Activated CD4-positive, alpha-beta memory T cell treated with anti-CD3 and anti-CD28 coated beads, Interleukin-2, amount 10 ng/mL, durations not matched to agents 7 days and 5 days (primary cell): ENCODE measurements at regions of chr7 and their contacts with region 1.

Region 1: GRCh38 chr7:129163875-129164544 is 19.5 kb downstream of the TSPAN33 start:
- DNase-seq: no peak
- H3K4me3 Mint-ChIP-seq: no peak overlapping the region
- H3K27ac Mint-ChIP-seq: no peak overlapping the region
- H3K4me1 Mint-ChIP-seq: peaks cover 9% of the 10 kb centered on the region
- H3K27me3 Mint-ChIP-seq: peaks cover 27% of the 10 kb centered on the region

Region 2: DNA sequence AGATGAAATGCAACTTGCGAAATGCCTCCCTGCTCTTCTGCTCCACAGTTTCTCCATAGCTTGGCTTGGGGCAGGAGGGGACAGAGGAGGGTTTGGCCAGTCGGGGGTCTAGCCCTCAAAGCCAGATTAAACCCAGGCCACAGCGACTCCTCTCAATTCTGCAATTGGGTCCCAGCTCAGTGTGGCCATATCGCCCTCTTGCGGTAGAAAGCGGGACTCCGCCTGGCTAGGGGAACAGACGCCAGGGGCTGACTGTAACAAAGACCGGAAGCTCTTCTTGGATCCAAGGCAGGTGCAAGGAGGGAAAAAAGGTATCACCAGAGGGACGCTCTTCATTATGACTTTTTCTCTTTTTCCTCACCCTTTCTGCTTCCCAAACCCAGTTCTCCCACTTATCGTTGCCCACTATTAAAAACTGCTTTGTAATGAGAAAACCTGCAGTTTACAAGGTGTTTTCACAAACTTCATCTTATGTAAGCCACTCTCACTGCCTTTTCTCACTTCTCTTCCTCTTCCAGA is 72.5 kb before region 1 on chr7:
- CTCF ChIA-PET with region 1: interaction called, 11 read pairs
- POLR2A ChIA-PET with region 1: no interaction called
- DNase-seq: peak; percentile 88
- H3K4me3 Mint-ChIP-seq: no peak overlapping the region
- H3K27ac Mint-ChIP-seq: no peak overlapping the region
- H3K4me1 Mint-ChIP-seq: peaks cover 33% of the 10 kb centered on the region
- H3K27me3 Mint-ChIP-seq: peaks cover 7% of the 10 kb centered on the region

Region 3: DNA sequence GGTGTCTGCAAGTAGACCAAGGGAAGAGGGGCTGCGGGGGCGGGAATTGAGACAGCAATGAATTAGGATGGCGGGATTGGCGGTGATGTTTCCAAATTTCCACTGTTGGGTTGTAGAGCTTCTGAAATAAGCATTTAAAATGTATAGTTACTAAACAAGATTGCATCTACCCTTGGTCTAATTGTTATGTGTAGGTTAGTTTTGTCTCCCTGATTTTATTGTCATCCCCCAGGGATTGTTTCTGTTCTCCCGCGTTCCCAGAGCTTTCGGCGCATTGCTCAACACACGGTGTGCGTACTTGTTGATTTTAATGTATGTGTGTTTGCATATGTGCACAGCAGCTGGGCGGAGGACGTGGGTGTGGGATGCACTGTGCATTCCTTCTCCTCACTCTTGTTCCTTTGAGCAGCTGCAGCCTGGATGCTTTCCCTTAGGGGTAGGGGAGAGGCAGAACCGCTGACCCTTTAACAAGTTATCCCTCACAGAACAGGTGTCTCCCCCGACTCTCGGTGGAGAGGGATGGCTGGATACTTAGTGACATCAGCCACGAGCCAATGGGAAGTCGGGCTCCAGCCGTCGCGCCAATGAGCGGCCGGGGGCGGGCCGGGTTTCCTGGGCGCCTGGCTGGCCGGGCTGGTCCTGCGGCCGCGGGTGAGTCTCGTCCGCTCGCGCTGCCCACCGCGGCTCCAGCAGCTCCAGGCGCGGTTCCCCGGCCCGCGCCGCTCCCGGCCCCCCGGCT is 19.7 kb before region 1 on chr7 and contains the start of gene TSPAN33:
- CTCF ChIA-PET with region 1: interaction called, 12 read pairs
- POLR2A ChIA-PET with region 1: no interaction called
- DNase-seq: peak; percentile 67
- H3K4me3 Mint-ChIP-seq: peak within 1 kb of the TSS; percentile 75
- H3K27ac Mint-ChIP-seq: no peak within 1 kb of the TSS
- H3K4me1 Mint-ChIP-seq: peaks cover 10% of the 10 kb centered on the region
- H3K27me3 Mint-ChIP-seq: peaks cover 51% of the 10 kb centered on the region
- total RNA-seq, gene TSPAN33: 0.48 to 0.86 TPM

Region 4: DNA sequence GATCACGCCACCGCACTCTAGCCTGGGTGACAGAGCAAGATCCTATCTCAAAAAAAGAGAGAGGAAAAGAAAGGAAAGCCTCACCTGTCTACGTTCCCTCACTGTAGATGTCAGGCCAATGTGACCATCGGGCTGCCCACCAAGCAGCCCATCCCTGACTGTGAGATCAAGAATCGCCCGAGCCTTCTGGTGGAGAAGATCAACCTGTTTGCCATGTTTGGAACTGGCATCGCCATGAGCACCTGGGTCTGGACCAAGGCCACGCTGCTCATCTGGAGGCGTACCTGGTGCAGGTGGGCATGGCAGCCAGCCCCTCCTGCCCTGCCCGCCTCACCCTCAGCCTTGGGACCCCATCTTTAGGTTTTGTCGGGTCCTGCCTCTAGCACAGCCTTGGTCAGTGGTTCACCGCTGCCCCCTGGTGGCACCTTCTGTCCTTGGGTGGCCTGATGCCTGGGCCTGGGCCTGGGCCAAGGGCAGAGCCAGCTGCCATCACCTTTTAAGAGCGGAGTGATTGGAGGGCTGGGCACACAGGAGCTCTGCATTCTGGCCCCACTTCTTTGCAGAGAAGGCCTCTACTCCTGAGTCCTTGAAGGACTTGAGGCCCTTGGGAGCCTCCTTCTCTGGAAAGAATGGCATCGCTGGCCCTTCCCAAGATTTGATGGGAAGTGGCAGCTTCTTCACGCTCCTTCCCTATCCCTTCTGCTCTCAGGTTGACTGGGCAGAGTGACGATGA is 46.4 kb after region 1 on chr7:
- CTCF ChIA-PET with region 1: interaction called, 46 read pairs
- POLR2A ChIA-PET with region 1: no interaction called
- DNase-seq: peak; percentile 65
- H3K4me3 Mint-ChIP-seq: no peak overlapping the region
- H3K27ac Mint-ChIP-seq: no peak overlapping the region
- H3K4me1 Mint-ChIP-seq: no peaks in the 10 kb centered on the region
- H3K27me3 Mint-ChIP-seq: peaks cover 10% of the 10 kb centered on the region

Region 5: GRCh38 chr7:129218514-129219062 is 54.6 kb after region 1 on chr7:
- CTCF ChIA-PET with region 1: interaction called, 11 read pairs
- POLR2A ChIA-PET with region 1: no interaction called
- DNase-seq: peak; percentile 82
- H3K4me3 Mint-ChIP-seq: no peak overlapping the region
- H3K27ac Mint-ChIP-seq: no peak overlapping the region
- H3K4me1 Mint-ChIP-seq: peaks cover 13% of the 10 kb centered on the region
- H3K27me3 Mint-ChIP-seq: peaks cover 6% of the 10 kb centered on the region

Region 6: GRCh38 chr7:129271500-129272355 is 107.7 kb after region 1 on chr7:
- CTCF ChIA-PET with region 1: interaction called, 17 read pairs
- POLR2A ChIA-PET with region 1: interaction called, 3 read pairs
- DNase-seq: peak; percentile 65
- H3K4me3 Mint-ChIP-seq: no peak overlapping the region
- H3K27ac Mint-ChIP-seq: no peak overlapping the region
- H3K4me1 Mint-ChIP-seq: peaks cover 5% of the 10 kb centered on the region
- H3K27me3 Mint-ChIP-seq: no peaks in the 10 kb centered on the region

Region 7: GRCh38 chr7:129308047-129308446 is 144.0 kb after region 1 on chr7:
- CTCF ChIA-PET with region 1: no interaction called
- POLR2A ChIA-PET with region 1: no interaction called
- DNase-seq: no peak
- H3K4me3 Mint-ChIP-seq: no peak overlapping the region
- H3K27ac Mint-ChIP-seq: no peak overlapping the region
- H3K4me1 Mint-ChIP-seq: no peaks in the 10 kb centered on the region
- H3K27me3 Mint-ChIP-seq: no peaks in the 10 kb centered on the region